Vagina (tissue), 2 donors: ENCODE measurements at regions of chr12 and their contacts with region 1.

Region 1: GRCh38 chr12:122752464-122753318 is at the start of gene DENR:
- DNase-seq: peak; percentile 97 to 99
- H3K4me3 ChIP-seq: peak within 1 kb of the TSS; percentile 75 to 87
- H3K27ac ChIP-seq: peak within 1 kb of the TSS; percentile 89
- H3K4me1 ChIP-seq: peaks cover 21% of the 10 kb centered on the region
- H3K27me3 ChIP-seq: no peaks in the 10 kb centered on the region
- CTCF ChIP-seq: peak; percentile 80 to 89 (median 81)
- POLR2A ChIP-seq: peak in 1 of 2 donors; percentile 55
- total RNA-seq, gene DENR: 18.2 TPM

Region 2: DNA sequence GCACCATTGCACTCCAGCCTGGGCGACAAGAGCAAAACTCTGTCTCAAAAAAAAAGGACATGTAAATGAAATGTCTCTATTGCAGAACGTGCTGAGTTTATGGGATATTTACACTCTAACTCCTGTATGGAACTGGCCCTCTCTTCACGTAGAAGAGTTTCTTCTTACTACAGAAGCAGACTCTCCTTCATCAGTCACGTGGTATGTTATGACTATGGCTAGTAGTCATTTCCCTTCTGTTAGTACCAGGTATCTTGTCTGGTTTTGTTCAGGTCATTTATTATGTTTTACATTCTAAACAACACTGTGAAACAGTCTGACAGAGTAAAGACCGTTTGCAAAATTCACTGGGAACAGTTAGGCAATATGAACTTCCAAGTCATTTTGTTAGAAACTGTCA is 205.4 kb before region 1 on chr12:
- intact Hi-C with region 1: no loop called
- DNase-seq: no peak
- H3K4me3 ChIP-seq: no peak overlapping the region
- H3K27ac ChIP-seq: no peak overlapping the region
- H3K4me1 ChIP-seq: no peaks in the 10 kb centered on the region
- H3K27me3 ChIP-seq: no peaks in the 10 kb centered on the region
- CTCF ChIP-seq: no peak
- POLR2A ChIP-seq: no peak

Region 3: GRCh38 chr12:122642009-122642408 is 110.7 kb before region 1 on chr12:
- intact Hi-C with region 1: loop called (anchors 2 kb)
- DNase-seq: no peak
- H3K4me3 ChIP-seq: no peak overlapping the region
- H3K27ac ChIP-seq: no peak overlapping the region
- H3K4me1 ChIP-seq: no peaks in the 10 kb centered on the region
- H3K27me3 ChIP-seq: no peaks in the 10 kb centered on the region
- CTCF ChIP-seq: no peak
- POLR2A ChIP-seq: no peak

Region 4: DNA sequence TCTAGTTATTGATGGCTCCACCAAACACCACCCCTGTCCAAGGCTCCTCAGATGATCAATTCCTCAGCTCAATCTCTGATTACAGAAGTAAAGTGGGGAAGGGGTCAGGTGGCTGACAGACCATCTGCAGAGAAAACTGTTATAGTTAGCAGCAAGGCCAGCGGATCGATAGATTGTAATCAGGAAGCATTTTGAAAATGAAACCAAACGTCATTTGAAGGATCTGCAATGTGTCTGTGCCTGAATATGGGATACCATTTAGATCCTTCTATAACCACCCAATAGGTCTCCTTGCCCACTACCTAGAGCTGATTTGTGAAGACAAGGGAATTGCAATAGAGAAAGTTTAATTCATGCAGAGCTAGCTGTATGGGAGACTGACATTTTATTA is 61.1 kb before region 1 on chr12:
- intact Hi-C with region 1: loop called (anchors 2 kb)
- DNase-seq: no peak
- H3K4me3 ChIP-seq: no peak overlapping the region
- H3K27ac ChIP-seq: no peak overlapping the region
- H3K4me1 ChIP-seq: no peaks in the 10 kb centered on the region
- H3K27me3 ChIP-seq: no peaks in the 10 kb centered on the region
- CTCF ChIP-seq: no peak
- POLR2A ChIP-seq: no peak

Region 5: DNA sequence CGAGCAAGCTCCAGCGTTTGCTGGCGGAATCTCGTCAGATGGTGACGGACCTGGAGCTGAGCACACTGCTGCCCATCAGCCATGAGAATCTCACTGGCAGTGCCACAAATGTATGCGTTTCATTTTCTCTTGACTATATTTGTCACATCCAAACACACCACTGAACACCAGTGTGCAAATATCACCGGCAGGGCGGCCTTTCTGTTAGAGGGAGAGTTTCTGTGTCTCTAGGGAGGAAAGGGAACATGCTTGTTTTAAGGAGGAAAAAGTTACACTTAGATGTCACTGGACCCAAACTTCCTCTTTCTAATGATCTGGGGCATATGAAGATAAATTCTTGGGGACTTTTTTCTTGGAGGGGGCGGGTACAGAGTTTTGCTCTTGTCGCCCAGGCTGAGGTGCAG is 60.6 kb after region 1 on chr12:
- intact Hi-C with region 1: no loop called
- DNase-seq: no peak
- H3K4me3 ChIP-seq: no peak overlapping the region
- H3K27ac ChIP-seq: no peak overlapping the region
- H3K4me1 ChIP-seq: no peaks in the 10 kb centered on the region
- H3K27me3 ChIP-seq: no peaks in the 10 kb centered on the region
- CTCF ChIP-seq: no peak
- POLR2A ChIP-seq: no peak